HepG2 (cell line): ENCODE measurements at regions of chr1 and their contacts with region 1.

Region 1: DNA sequence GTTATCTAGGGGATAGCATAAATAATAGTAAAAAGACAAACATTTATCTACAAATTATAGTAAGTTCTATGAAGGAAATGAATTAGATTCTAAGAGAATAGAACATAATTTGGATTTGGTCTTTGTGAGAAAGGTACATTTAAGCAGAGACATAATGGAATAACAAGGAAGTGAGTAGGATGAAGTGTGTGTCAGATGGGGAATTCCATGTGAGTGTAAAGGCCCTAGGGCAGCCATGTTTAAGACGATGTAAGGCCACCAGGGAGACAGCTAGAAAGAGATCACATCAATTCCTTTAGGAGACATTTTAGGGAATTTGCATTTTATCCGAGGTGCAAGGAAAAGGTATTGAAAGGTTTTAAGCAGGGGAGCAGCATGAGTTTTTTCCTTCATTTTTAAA is 33.8 kb upstream of the ELAVL4 start:
- DNase-seq: no peak
- ATAC-seq: no peak
- H3K4me3 ChIP-seq: no peak overlapping the region
- H3K27ac ChIP-seq: no peak overlapping the region
- H3K4me1 ChIP-seq: no peaks in the 10 kb centered on the region
- H3K27me3 ChIP-seq: no peaks in the 10 kb centered on the region; a peak in 1 of 5 replicates
- CTCF ChIP-seq: no peak
- EP300 ChIP-seq: no peak
- POLR2A ChIP-seq: no peak
- RAD21 ChIP-seq: no peak

Region 2: GRCh38 chr1:50060279-50060678 is 14.7 kb before region 1 on chr1:
- CTCF ChIA-PET with region 1: no interaction called
- POLR2A ChIA-PET with region 1: no interaction called
- in situ Hi-C with region 1: no loop called
- intact Hi-C with region 1: loop called (anchors 1 kb)
- DNase-seq: no peak
- ATAC-seq: no peak
- H3K4me3 ChIP-seq: no peak overlapping the region
- H3K27ac ChIP-seq: no peak overlapping the region
- H3K4me1 ChIP-seq: no peaks in the 10 kb centered on the region
- H3K27me3 ChIP-seq: no peaks in the 10 kb centered on the region
- CTCF ChIP-seq: no peak
- EP300 ChIP-seq: no peak
- POLR2A ChIP-seq: no peak
- RAD21 ChIP-seq: no peak